Lower leg skin (tissue), 4 donors: ENCODE measurements at regions of chr19 and their contacts with region 1.

Region 1: DNA sequence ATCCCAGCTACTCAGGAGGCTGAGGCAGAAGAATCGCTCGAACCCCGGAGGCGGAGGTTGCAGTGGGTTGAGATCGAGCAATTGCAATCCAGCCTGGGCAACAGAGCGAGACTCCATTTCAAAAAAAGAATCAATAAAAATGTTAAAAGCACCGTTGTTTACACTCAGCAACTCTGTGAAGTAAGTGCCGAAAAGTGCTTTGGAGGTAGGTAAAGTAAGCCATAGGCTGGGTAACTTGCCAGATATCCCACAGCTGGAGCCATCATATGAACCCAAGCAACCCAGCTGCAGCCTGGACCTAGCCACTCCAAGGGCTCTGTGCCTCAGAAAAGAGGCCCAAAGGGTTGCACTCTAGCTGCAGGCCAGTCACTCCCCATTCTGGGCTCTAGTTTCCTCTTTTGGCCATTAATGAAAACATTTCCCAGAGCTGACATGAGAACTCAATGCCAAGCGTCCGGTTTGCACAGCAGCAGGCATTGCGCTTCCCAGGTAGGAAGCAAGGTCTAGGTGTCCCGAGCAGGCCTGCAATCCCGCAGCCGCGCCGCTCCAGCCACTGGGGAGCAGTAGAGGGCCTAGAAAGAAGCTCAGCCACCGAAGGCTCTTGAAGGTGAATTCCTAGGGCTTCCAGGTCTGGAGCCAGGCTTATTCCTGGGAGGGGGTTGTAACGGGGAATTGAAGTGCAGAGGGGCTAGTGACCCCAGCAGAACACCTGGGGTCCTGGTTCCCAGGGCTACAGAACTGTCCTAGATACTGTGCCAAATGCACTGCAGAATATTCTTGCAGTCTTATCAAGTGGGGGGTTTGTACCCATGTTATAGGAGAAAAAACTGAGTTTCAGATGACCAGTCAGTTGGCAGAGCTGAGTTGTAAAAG is 4.1 kb upstream of the CD79A start:
- DNase-seq: no peak
- H3K4me3 ChIP-seq: no peak overlapping the region
- CTCF ChIP-seq: no peak
- POLR2A ChIP-seq: no peak

Region 2: DNA sequence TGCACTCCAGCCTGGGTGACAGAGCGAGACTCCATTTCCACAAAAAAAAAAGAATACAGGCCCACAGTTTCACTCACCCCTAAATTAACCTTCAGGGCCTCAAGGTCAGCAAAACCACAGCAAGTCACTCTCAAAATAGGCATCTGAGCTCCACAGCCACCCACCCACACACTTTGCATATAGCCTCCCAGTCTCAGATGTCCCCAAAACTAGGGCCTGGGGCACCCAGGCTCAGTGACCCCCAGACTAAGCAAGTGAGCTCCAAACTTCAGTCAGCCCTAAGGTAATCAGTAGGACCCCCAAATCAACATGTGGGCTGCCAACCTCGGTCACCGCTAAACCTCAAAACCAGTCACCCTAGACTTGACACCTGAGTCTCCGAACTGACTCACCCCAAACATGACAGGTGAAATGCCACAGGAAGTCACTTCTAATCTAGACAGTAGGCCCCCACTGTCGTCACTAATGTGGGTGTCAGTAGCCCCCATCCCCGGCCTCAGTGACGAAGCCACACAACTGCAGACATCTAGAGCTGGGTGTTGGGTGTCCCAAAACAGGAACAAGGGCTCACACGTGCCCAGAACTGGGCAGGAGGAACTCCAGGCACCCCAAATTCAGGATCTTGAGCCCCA is 72.2 kb after region 1 on chr19:
- intact Hi-C with region 1: loop called (anchors 5 kb)
- DNase-seq: no peak
- H3K4me3 ChIP-seq: no peak overlapping the region
- CTCF ChIP-seq: no peak
- POLR2A ChIP-seq: no peak

Region 3: GRCh38 chr19:42584466-42584865 is 711.5 kb after region 1 on chr19:
- intact Hi-C with region 1: no loop called
- DNase-seq: no peak
- H3K4me3 ChIP-seq: no peak overlapping the region
- CTCF ChIP-seq: no peak
- POLR2A ChIP-seq: no peak